Naive thymus-derived CD4-positive, alpha-beta T cell (primary cell): ENCODE measurements at regions of chr14 and their contacts with region 1.

Region 1: DNA sequence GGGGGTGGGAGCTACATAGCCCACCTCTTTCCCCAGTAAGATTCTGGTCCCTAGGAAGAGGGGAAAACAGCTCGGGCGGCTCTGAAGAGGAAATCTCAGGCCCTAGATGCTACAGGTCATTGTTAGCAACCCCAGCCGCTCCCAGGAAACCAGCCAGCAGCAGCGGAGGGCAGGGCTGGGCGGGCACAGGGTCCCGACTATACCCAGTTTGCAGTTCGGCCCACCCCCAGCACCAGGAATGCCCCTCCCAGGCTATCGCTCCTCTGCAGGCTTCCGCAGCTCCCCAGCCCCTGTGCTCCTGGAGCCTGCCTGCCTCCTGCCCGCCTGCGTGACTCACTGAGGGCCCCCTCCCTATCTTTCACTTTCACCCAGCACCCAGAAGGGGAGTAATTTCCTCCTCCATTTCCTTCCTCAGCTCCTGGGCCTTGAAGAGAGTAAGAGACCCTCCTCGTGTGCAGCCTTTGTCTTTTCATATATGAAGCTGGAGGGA is 27.2 kb upstream of the PNMA1 start:
- DNase-seq: peak in 7 of 9 donors; percentile 54 to 75 (median 57)
- ATAC-seq: peak; percentile 78
- H3K4me3 ChIP-seq: peak overlapping the region; percentile 52
- H3K4me3 Mint-ChIP-seq: peak overlapping the region; percentile 66 to 95 (median 88)
- H3K27ac ChIP-seq: peak overlapping the region; percentile 72
- H3K27ac Mint-ChIP-seq: peak overlapping the region; percentile 77 to 99 (median 93)
- H3K4me1 ChIP-seq: peaks cover 65 to 69% of the 10 kb centered on the region in 2 donors
- H3K4me1 Mint-ChIP-seq: peaks cover 43 to 71% (median 67%) of the 10 kb centered on the region in 7 donors
- H3K27me3 ChIP-seq: no peaks in the 10 kb centered on the region
- H3K27me3 Mint-ChIP-seq: no peaks in the 10 kb centered on the region

Region 2: GRCh38 chr14:73753959-73754882 is 12.8 kb after region 1 on chr14:
- CTCF ChIA-PET with region 1: interaction called, 37 read pairs
- POLR2A ChIA-PET with region 1: interaction called, 267 read pairs
- intact Hi-C with region 1: loop called (anchors 1 kb)
- DNase-seq: peak in 2 of 9 donors; percentile 29 to 45
- ATAC-seq: peak; percentile 53
- H3K4me3 ChIP-seq: peak overlapping the region; percentile 59
- H3K4me3 Mint-ChIP-seq: peak overlapping the region; percentile 83 to 97 (median 90)
- H3K27ac ChIP-seq: peak overlapping the region; percentile 86
- H3K27ac Mint-ChIP-seq: peak overlapping the region; percentile 84 to 99 (median 99)
- H3K4me1 ChIP-seq: peaks cover 85 to 86% of the 10 kb centered on the region in 2 donors
- H3K4me1 Mint-ChIP-seq: peaks cover 79 to 95% (median 93%) of the 10 kb centered on the region in 7 donors
- H3K27me3 ChIP-seq: no peaks in the 10 kb centered on the region
- H3K27me3 Mint-ChIP-seq: no peaks in the 10 kb centered on the region

Region 3: GRCh38 chr14:73771848-73772638 is 30.6 kb after region 1 on chr14:
- CTCF ChIA-PET with region 1: interaction called, 5 read pairs
- POLR2A ChIA-PET with region 1: interaction called, 9 read pairs
- intact Hi-C with region 1: loop called in 1 of 2 experiments (anchors 1 kb)
- DNase-seq: peak in 8 of 9 donors; percentile 57 to 73 (median 65)
- ATAC-seq: peak; percentile 82
- H3K4me3 ChIP-seq: peak overlapping the region; percentile 24
- H3K4me3 Mint-ChIP-seq: peak overlapping the region; percentile 63 to 81 (median 74)
- H3K27ac ChIP-seq: peak overlapping the region; percentile 69
- H3K27ac Mint-ChIP-seq: peak overlapping the region; percentile 80 to 94 (median 92)
- H3K4me1 ChIP-seq: peaks cover 56 to 65% of the 10 kb centered on the region in 2 donors
- H3K4me1 Mint-ChIP-seq: peaks cover 57 to 79% (median 69%) of the 10 kb centered on the region in 7 donors
- H3K27me3 ChIP-seq: no peaks in the 10 kb centered on the region
- H3K27me3 Mint-ChIP-seq: no peaks in the 10 kb centered on the region